Aorta (tissue), 5 donors: ENCODE measurements at regions of chr14 and their contacts with region 1.

Region 1: DNA sequence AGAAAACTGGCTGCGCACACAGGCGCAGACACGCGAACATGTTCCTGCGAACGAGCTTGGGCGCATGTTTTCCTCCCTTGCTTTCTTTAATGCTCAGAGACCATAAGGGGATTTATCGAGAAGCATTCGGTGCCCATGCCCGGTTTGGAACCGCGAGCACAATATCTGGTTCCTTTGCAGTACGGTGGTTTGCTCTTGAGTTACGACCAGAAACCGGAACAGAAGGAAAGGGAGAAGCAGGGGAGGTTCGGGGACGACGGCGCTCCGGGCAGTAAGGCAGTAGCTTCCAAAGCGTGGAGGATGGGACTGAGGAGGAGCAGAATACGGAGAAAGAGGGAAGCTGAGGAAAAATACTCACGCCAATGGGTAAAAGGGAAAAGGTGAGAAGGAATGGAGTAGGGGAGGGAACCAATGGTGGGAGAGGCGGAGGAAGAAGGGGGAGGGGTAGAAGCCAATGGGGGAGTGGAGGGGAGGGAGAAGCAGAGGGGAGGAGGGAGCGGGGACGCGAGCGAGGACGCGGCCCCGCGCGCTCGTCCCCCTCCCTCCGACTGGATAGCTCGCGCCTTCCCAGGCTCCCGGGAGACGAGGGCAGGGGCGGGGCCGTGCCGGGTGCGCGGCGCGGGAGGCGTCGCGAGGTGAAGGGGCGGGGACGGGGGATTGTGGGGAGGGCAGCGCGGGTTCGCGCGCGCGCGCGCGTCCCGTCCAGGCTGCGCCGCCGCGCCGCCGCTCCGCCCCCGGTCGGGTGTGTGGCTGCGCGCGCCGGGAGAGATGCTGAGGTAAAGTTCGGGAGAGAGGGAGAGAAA is 625 bp upstream of the ARHGAP5 start:
- DNase-seq: peak; percentile 98 to 99
- ATAC-seq: peak; percentile 97
- H3K4me3 ChIP-seq: peak overlapping the region; percentile 93 to 98
- H3K27ac ChIP-seq: peak overlapping the region; percentile 80 to 94
- H3K4me1 ChIP-seq: peaks cover 0 to 2% of the 10 kb centered on the region in 2 donors
- H3K27me3 ChIP-seq: no peaks in the 10 kb centered on the region

Region 2: DNA sequence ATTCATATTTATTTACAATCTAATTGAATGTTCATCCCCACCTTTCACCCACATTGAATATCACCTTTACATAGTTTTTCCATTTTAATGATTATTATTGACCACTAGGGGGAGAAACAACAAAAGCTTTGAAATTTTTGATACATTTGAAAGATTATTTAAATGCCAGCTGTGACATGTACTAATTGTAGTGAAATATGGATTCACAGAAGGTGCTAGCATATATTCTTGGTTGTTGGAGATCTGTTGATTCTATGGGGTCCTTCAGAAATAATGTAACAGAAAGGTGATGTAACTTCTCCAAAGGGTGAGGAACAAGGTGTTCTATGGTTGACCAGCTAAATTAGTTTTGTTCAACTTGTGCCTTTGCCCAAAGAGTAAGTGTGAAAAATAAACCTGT is 566.3 kb before region 1 on chr14:
- intact Hi-C with region 1: loop called in 1 of 2 experiments (anchors 10 kb)
- DNase-seq: no peak
- ATAC-seq: no peak
- H3K4me3 ChIP-seq: no peak overlapping the region
- H3K27ac ChIP-seq: no peak overlapping the region
- H3K4me1 ChIP-seq: peaks cover 0 to 3% of the 10 kb centered on the region in 2 donors
- H3K27me3 ChIP-seq: no peaks in the 10 kb centered on the region

Region 3: GRCh38 chr14:32129124-32129523 is 52.6 kb after region 1 on chr14:
- intact Hi-C with region 1: loop called in 1 of 2 experiments (anchors 10 kb)
- DNase-seq: no peak
- ATAC-seq: no peak
- H3K4me3 ChIP-seq: no peak overlapping the region
- H3K27ac ChIP-seq: no peak overlapping the region
- H3K4me1 ChIP-seq: peaks cover 0 to 5% of the 10 kb centered on the region in 2 donors
- H3K27me3 ChIP-seq: no peaks in the 10 kb centered on the region

Region 4: GRCh38 chr14:32202998-32203882 is 126.8 kb after region 1 on chr14 and contains the start of gene RNU6-8:
- intact Hi-C with region 1: loop called (anchors 2 to 5 kb)
- DNase-seq: peak; percentile 89 to 93
- ATAC-seq: peak; percentile 96
- H3K4me3 ChIP-seq: peak within 1 kb of the TSS; percentile 62 to 88
- H3K27ac ChIP-seq: peak within 1 kb of the TSS; percentile 19 to 61
- H3K4me1 ChIP-seq: peaks cover 0 to 2% of the 10 kb centered on the region in 2 donors
- H3K27me3 ChIP-seq: no peaks in the 10 kb centered on the region
- total RNA-seq, gene RNU6-8: not detected

Region 5: DNA sequence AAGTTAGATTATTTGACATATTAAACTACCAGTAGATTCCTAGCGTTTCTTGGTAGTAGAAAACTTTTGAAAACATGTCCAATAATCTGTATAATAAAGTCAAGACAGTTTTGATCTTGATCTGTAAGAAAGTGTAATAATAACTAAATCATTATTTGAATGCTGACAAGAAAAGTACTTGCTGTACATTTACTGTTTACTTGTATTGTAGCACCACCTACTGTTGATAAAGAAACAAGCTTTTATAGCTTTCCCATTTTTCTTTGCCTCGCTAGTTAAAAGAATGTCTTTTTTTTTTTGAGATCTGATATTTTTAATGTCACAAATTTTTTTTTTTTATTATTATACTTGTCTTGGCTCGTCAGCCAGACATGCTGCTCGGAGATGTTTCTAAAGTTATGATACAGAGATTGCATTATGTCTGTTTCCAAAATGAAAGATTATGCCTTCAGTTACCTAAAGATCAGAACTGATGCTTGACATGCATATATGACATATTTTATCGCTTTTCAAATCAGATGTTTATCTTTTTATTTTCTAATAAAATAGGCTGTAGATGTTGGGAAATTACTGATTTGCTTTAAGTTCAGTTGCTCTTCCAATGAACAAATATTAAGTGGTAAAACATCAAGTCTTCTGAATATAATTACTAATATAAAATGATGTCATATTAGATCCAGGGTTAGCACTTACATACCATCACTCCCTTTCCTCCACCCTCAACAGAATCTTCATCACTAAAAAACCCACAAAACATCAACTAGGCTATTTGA is 393.1 kb after region 1 on chr14:
- intact Hi-C with region 1: loop called in 1 of 2 experiments (anchors 2 kb)
- DNase-seq: no peak
- ATAC-seq: no peak
- H3K4me3 ChIP-seq: no peak overlapping the region
- H3K27ac ChIP-seq: peak overlapping the region in 1 of 2 donors; percentile 51
- H3K4me1 ChIP-seq: peaks cover 6 to 21% of the 10 kb centered on the region in 2 donors
- H3K27me3 ChIP-seq: no peaks in the 10 kb centered on the region

Region 6: GRCh38 chr14:32560209-32560857 is 483.9 kb after region 1 on chr14:
- intact Hi-C with region 1: loop called in 1 of 2 experiments (anchors 5 kb)
- DNase-seq: peak in 1 of 2 donors; percentile 46
- ATAC-seq: peak; percentile 80
- H3K4me3 ChIP-seq: no peak overlapping the region
- H3K27ac ChIP-seq: no peak overlapping the region
- H3K4me1 ChIP-seq: peaks cover 3 to 6% of the 10 kb centered on the region in 2 donors
- H3K27me3 ChIP-seq: no peaks in the 10 kb centered on the region